GM18951 (cell line): ENCODE measurements at regions of chr7 and their contacts with region 1.

Region 1: DNA sequence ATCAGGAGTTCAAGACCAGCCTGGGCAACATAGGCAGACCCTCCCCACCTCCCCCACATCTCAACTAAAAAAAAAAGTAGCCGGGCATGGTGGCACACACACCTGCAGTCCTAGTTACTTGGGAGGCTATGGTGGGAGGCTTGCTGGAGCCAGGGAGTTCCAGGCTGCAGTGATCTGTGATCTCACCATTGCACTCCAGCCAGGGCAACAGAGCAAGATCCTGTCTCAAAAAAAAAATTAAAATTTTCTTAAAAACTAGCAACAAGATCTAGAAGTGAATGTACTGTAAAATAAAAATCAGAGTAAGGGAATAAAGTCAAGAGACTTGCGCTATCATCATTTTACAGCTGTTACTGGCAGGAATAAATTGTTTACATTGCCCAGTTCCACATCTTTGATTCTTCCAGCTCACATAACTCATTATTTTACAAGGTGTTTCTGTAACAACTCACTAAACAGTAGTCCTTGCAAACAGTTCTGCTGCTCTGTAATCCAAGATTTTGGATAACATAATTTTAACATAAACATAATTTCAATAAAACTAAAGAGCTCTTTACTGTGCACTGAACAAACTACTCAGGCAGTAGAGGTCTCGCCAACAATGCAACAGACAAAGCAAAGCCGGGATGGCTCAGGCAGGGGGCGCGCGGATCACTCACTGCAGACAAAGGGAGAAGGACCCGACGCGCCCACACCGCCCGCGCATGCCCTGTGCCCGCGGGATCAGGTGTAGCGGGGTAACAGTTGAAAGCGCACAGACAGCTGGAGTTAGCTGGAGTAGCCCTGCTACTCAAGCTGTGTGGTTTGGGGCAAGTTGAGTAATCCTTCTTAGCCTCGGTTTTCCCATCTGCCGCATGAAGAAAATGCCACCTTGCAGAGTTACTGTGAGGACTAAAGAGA is 73.3 kb upstream of the NFE2L3 start:
- POLR2A ChIP-seq: no peak

Region 2: DNA sequence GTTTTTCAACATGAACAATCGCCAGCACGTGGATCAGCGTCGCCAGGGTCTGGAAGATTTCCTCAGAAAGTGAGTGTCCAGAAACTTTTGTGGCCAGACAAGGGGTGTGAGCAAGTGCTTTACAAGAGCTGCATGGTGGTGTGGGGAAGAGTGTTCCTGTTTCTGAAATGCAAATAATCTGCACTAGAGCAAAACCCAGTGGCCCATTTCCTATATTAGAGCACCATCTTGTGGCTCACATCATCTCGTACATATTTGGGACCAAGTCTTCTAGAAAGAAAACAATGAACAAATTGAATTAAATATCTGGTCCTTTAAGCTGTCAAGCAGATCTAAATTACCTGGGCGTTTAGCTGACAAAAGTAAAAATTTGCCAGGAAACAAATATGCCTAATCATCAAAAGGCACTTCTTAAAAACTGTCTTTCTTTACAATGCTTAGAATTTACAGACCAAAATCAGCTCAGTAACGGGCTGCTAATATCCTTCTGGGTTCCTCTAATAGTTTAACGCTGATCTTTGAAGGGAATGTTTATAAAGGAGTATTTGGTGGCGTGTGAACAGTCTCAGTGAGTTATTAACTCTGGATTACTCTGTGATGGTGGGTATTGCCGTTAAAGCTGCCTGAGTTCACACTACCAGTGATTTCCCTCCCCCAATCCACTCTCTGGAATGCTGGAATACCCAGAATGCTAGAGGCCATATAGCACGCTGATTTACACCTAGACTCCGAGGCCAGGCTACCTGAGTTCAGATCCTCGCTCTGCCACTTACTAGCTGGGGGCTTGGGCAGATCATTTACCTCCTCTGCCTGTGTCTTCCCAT is 286.6 kb after region 1 on chr7:
- in situ Hi-C with region 1: loop called (anchors 10 kb)
- POLR2A ChIP-seq: no peak

Region 3: DNA sequence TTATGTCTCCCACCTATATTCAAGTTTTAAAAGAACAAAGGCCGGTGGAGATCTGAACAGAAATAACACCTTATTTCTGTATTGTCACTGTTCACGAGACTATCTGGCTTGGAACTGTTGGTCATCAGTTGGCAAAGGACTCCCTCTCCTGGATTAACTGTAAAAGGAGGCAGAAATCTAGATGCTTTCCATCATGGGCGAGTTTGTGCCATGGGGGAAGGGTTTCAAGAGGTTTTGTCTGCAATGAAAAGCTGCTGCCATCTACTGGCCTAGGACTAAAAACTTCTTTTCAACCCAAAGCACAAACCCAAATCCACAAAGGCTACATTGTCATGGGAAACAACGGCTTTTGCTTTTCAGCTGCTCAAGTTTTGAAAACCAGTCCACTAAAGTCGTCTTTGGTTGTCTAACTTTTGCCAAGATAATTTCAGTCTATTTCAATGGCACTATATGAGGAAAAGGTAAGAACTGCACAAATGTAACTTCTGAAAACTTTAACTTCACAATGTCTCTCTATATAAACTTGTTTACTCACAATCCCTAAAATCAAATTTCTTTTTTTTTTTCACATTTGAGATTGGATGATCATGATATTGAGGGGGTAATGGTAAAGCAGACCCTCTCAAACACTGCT is 588.9 kb after region 1 on chr7:
- in situ Hi-C with region 1: loop called (anchors 25 kb)
- POLR2A ChIP-seq: no peak